ENCODE measurements at regions of chr4 and their contacts with region 1.

Region 1: GRCh38 chr4:81314196-81314896 is 99.3 kb upstream of the PRKG2 start:
- DNase-seq: peak; percentile 75
- H3K4me3 ChIP-seq: no peak overlapping the region; the same call in 1 of the 2 replicates
- H3K27ac ChIP-seq: peak overlapping the region; percentile 73
- H3K27me3 ChIP-seq: no peaks in the 10 kb centered on the region
- CTCF ChIP-seq: no peak

Region 2: DNA sequence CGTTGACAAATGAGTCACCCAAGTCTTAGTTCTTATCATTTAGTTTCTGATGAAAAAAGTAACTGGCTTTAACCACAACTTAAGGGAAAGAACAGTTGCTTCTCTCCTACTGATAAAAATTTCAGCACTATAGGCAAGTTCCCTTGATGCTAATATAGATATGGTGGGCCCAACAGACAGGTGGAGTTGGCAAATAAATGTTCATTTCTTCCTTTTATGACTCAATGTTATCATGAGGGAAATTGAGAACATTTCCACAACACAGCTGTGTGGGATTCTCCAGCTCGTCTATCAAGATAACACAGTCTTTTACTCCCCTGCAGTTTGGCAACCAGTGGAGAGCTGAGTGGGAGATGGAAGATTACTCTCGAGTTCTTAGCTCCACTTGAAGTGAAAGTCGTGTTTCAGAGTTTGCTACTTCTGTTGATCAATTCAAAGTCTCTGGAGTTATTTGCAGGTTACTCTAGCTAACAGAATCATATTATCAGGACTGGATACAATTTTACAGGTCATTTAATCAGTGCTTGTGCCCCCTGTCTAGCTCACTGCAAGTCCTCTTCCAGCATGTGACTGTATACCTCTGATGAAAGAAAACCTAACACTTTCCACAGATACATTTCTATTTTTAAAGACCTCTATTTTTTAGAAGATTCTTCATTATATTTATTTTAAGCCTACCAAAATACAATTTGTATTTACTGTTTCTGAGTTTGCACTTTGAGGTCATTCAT is 1635.7 kb before region 1 on chr4:
- CTCF ChIA-PET with region 1: no interaction called
- POLR2A ChIA-PET with region 1: no interaction called
- DNase-seq: no peak
- H3K4me3 ChIP-seq: no peak overlapping the region
- H3K27ac ChIP-seq: no peak overlapping the region
- H3K27me3 ChIP-seq: no peaks in the 10 kb centered on the region
- CTCF ChIP-seq: no peak

Region 3: DNA sequence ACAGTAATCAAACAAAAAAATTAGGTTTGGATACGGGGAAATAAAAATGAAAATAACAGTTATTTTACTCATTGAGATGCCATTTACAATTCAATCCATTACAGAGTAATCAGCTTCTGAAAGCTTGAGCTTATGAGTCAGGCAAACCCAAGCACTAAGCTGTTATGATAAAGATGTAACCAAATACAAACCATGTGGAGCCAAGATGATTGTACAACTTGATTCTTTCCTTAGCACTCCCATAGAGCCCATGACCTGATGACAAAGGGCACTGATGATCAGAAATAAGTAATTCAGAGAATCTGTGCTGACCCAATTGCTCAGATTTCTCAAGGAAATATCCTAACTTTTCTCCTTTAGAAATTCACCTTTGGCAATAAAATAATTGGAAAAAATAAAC is 58.8 kb before region 1 on chr4:
- CTCF ChIA-PET with region 1: no interaction called
- POLR2A ChIA-PET with region 1: interaction called, 10 read pairs
- DNase-seq: peak; percentile 66
- H3K4me3 ChIP-seq: no peak overlapping the region
- H3K27ac ChIP-seq: no peak overlapping the region
- H3K27me3 ChIP-seq: no peaks in the 10 kb centered on the region
- CTCF ChIP-seq: no peak

Measured in AG04450 (cell line).